ENCODE measurements at regions of chrX and their contacts with region 1.

Region 1: DNA sequence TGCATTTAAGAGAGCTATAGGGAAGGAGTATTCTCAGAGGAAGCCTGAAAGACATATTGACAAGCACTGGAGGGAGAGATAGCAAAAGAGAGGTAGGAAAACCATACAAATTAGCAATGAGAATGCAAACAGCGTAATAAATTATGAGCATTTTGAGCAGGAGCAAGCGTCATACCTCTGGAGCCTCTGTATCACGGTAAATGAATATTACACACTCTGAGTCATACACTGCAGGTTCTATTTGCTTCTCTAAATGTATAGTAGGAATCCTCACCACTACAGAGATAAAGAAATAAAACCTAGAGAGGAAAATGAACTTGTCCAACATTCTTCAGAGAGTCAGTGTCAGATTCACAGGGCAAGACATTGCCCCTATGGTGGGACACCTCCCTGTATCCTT is 46.4 kb upstream of the GABRE start:
- DNase-seq: no peak
- ATAC-seq: no peak
- H3K4me3 ChIP-seq: no peak overlapping the region
- H3K27ac ChIP-seq: no peak overlapping the region
- H3K4me1 ChIP-seq: no peaks in the 10 kb centered on the region
- H3K27me3 ChIP-seq: no peaks in the 10 kb centered on the region
- CTCF ChIP-seq: no peak

Region 2: GRCh38 chrX:151789179-151789800 is 231.6 kb before region 1 on chrX:
- intact Hi-C with region 1: no loop called
- DNase-seq: peak; percentile 9 to 24
- ATAC-seq: peak; percentile 57 to 89 (median 75)
- H3K4me3 ChIP-seq: no peak overlapping the region
- H3K27ac ChIP-seq: no peak overlapping the region
- H3K4me1 ChIP-seq: peaks cover 0 to 5% (median 0%) of the 10 kb centered on the region in 9 donors
- H3K27me3 ChIP-seq: no peaks in the 10 kb centered on the region
- CTCF ChIP-seq: no peak

Region 3: DNA sequence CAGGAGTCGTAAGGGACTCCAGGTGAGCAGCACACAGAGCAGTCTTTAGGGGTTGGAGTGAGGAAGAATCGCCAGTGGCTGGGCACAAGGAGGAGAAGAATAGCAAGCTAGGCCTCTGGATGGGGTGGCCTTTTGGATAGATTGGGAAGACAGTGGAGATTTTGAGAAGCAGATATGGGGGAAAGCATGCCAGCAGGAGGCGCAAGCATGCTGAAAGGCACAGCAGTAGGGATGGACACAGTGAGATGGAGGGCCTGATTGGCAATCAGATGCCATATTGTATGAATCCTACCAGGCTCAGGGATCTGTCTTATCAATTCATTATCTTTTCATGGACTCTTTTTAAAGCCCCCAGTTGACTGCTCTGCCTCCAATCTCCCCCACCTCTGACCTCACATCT is 168.6 kb before region 1 on chrX:
- intact Hi-C with region 1: no loop called
- DNase-seq: no peak
- ATAC-seq: no peak
- H3K4me3 ChIP-seq: no peak overlapping the region
- H3K27ac ChIP-seq: no peak overlapping the region
- H3K4me1 ChIP-seq: no peaks in the 10 kb centered on the region
- H3K27me3 ChIP-seq: peaks cover 0 to 14% (median 0%) of the 10 kb centered on the region in 7 donors
- CTCF ChIP-seq: no peak

Region 4: DNA sequence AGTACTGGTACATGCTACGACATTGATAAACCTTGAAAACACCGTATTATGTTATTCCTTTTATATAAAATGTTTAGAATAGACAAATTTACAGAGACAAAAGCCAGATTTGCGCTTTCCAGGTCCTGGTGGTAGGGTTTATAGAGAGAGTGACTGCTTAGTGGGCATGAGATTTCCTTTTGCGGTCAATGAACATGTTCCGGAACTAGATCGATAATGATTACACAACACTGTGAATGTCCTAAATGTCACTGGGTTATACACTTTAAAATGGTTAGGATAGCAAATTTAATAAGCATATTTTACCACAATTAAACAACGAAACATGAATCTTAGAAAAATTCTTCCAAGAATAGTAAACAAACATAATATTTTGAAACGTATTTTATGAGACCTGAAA is 40.2 kb after region 1 on chrX:
- intact Hi-C with region 1: loop called in 1 of 10 experiments (anchors 1 kb)
- DNase-seq: no peak
- ATAC-seq: no peak
- H3K4me3 ChIP-seq: no peak overlapping the region
- H3K27ac ChIP-seq: no peak overlapping the region
- H3K4me1 ChIP-seq: no peaks in the 10 kb centered on the region
- H3K27me3 ChIP-seq: no peaks in the 10 kb centered on the region
- CTCF ChIP-seq: no peak